ENCODE measurements at regions of chr2 and their contacts with region 1.

Region 1: GRCh38 chr2:223797811-223798721 is 39.3 kb downstream of the AP1S3 start:
- DNase-seq: peak in 1 of 5 donors; percentile 32
- H3K4me3 ChIP-seq: no peak overlapping the region
- H3K27ac ChIP-seq: no peak overlapping the region
- H3K4me1 ChIP-seq: no peaks in the 10 kb centered on the region
- H3K27me3 ChIP-seq: no peaks in the 10 kb centered on the region
- CTCF ChIP-seq: peak in 2 of 3 donors; percentile 80 to 85
- EP300 ChIP-seq: no peak
- POLR2A ChIP-seq: no peak

Region 2: DNA sequence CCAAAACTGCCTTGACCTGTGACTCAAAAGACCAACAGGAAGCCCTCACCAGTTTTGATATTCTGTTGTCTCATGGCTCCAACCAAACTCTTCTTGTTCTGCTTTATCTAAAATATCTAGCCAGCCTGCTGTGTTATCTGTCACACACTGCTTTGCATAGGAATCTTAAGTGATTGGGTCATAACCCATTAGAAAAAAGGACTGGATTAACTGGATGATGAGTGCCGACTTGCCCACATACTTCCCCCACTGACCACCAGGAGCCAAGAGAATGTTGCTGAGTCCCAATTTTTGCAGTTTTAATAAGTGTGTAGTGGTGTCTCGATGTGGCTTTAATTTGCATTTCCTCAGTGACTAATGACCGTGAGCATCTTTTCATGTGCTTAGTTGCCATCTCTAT is 1120.1 kb before region 1 on chr2:
- intact Hi-C with region 1: no loop called
- DNase-seq: no peak
- H3K4me3 ChIP-seq: no peak overlapping the region
- H3K27ac ChIP-seq: no peak overlapping the region
- H3K4me1 ChIP-seq: no peaks in the 10 kb centered on the region
- H3K27me3 ChIP-seq: peaks cover 2% of the 10 kb centered on the region
- CTCF ChIP-seq: no peak
- EP300 ChIP-seq: no peak
- POLR2A ChIP-seq: no peak

Region 3: DNA sequence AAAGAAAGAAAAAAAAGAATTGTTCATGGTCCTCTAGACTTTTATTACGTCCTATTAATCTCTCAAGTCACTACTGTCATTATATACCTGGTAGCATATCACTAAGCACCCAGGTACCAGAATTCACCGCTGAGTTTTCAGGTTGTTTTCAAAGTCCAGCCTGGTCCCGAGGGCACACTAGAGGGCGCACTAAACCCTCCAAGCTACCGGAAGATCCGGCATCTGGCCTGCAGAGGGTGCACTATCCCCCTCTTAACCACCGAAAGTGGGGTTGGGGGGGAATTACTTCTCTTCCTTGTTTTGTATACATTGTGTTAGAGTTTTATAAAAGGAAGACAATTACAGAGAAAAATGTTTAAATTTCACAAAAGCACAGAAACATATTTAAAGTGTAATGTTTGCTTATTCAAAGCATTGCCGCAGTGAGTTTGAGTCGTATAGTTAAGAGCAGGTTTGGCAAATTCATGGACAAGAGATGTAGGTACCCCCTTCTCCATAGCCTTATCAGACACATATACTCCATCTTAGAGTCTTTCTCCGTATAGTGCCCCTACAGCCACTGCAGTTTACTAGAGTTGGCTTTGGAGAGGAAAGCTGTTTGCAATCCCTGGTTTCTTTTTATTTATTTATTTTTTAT is 1107.4 kb before region 1 on chr2:
- intact Hi-C with region 1: loop called in 1 of 4 experiments (anchors 10 kb)
- DNase-seq: peak; percentile 36 to 75 (median 61)
- H3K4me3 ChIP-seq: no peak overlapping the region
- H3K27ac ChIP-seq: no peak overlapping the region
- H3K4me1 ChIP-seq: no peaks in the 10 kb centered on the region
- H3K27me3 ChIP-seq: no peaks in the 10 kb centered on the region
- CTCF ChIP-seq: peak; percentile 41 to 64 (median 62)
- EP300 ChIP-seq: no peak
- POLR2A ChIP-seq: no peak

Region 4: GRCh38 chr2:222976521-222977076 is 821.5 kb before region 1 on chr2:
- intact Hi-C with region 1: loop called (anchors 2 to 5 kb)
- DNase-seq: no peak
- H3K4me3 ChIP-seq: no peak overlapping the region
- H3K27ac ChIP-seq: no peak overlapping the region
- H3K4me1 ChIP-seq: no peaks in the 10 kb centered on the region
- H3K27me3 ChIP-seq: no peaks in the 10 kb centered on the region
- CTCF ChIP-seq: no peak
- EP300 ChIP-seq: no peak
- POLR2A ChIP-seq: no peak

Region 5: GRCh38 chr2:222982010-222982908 is 815.8 kb before region 1 on chr2:
- intact Hi-C with region 1: loop called in 2 of 4 experiments (anchors 5 kb)
- DNase-seq: peak in 4 of 5 donors; percentile 17 to 56 (median 40)
- H3K4me3 ChIP-seq: no peak overlapping the region
- H3K27ac ChIP-seq: no peak overlapping the region
- H3K4me1 ChIP-seq: no peaks in the 10 kb centered on the region
- H3K27me3 ChIP-seq: no peaks in the 10 kb centered on the region
- CTCF ChIP-seq: no peak
- EP300 ChIP-seq: no peak
- POLR2A ChIP-seq: no peak

Region 6: DNA sequence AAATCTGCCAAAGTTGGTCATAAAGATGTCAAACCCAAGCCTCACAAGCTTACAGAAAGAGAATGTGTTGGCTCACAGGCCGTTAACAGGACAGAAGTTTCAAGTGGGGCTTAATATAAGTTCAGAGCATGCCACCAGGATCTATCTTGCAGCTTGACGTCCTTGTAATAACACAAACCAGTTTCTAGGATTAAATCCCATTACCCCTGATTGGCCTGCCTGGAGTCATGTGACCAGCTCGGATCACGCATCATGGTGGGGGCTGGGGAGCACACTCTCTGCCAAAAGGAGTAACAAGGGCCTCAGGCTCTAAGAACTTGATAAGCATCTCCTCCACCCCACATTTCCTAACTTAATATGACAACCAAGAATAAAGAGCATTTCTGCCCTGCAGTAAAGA is 157.0 kb before region 1 on chr2:
- intact Hi-C with region 1: no loop called
- DNase-seq: no peak
- H3K4me3 ChIP-seq: no peak overlapping the region
- H3K27ac ChIP-seq: no peak overlapping the region
- H3K4me1 ChIP-seq: peaks cover 4% of the 10 kb centered on the region
- H3K27me3 ChIP-seq: no peaks in the 10 kb centered on the region
- CTCF ChIP-seq: no peak
- EP300 ChIP-seq: no peak
- POLR2A ChIP-seq: no peak